Activated CD4-positive, alpha-beta memory T cell treated with anti-CD3 and anti-CD28 coated beads, Interleukin-2, amount 10 ng/mL, durations not matched to agents 7 days and 5 days (primary cell): ENCODE measurements at regions of chr3 and their contacts with region 1.

Region 1: GRCh38 chr3:38136777-38137614 is at the start of gene ACAA1:
- DNase-seq: peak; percentile 99
- H3K4me3 Mint-ChIP-seq: peak within 1 kb of the TSS; percentile 90
- H3K27ac Mint-ChIP-seq: peak within 1 kb of the TSS; percentile 96
- H3K4me1 Mint-ChIP-seq: peaks cover 74% of the 10 kb centered on the region
- H3K27me3 Mint-ChIP-seq: no peaks in the 10 kb centered on the region
- total RNA-seq, gene ACAA1: 76.8 to 77.5 TPM

Region 2: DNA sequence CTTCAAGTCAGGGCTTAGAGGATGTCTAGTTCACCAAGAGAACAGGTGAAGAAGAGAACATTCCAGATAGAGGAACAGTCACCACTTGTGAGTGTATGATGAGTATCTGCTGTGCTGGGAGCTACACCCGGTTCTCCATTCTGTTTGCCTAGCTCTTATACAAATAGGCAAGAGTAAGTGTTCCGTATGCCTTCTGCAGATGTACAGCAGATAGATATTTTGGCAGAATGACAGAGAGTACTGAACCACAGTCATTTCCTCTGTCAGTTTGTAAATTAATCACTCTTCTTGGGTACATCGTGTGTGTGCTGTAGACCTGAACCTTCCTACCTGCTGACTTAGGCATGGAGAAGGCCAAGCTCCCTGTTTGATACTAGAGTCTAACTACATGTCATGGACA is 383.6 kb before region 1 on chr3:
- CTCF ChIA-PET with region 1: no interaction called
- POLR2A ChIA-PET with region 1: no interaction called
- DNase-seq: no peak
- H3K4me3 Mint-ChIP-seq: no peak overlapping the region
- H3K27ac Mint-ChIP-seq: no peak overlapping the region
- H3K4me1 Mint-ChIP-seq: peaks cover 3% of the 10 kb centered on the region
- H3K27me3 Mint-ChIP-seq: peaks cover 26% of the 10 kb centered on the region

Region 3: DNA sequence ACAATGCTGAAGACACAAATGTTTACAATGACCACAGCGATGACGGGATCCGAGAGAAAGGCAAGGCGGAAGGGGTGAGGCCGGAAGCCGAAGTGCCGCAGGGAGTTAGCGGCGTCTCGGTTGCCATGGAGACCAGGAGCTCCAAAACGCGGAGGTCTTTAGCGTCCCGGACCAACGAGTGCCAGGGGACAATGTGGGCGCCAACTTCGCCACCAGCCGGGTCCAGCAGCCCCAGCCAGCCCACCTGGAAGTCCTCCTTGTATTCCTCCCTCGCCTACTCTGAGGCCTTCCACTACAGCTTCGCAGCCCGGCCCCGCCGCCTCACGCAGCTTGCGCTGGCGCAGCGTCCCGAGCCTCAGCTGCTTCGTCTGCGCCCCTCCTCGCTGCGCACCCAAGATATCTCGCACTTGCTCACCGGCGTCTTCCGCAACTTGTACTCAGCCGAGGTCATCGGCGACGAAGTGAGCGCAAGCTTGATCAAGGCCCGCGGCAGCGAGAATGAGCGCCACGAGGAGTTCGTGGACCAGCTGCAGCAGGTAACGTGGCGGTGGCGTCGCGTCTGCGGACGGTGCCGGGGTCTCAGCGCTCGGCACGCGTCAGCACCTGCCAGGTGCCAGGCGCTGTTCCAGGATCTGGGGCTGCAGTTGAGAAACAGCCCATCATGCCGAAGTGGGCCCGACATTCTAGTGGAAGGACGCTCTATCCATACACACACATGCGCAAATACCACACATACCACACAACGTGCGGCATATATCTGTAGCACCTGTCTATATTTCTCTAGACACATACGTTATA is 97.7 kb before region 1 on chr3 and contains the start of gene DLEC1:
- CTCF ChIA-PET with region 1: interaction called, 3 read pairs
- POLR2A ChIA-PET with region 1: interaction called, 28 read pairs
- DNase-seq: peak; percentile 94
- H3K4me3 Mint-ChIP-seq: peak within 1 kb of the TSS; percentile 54
- H3K27ac Mint-ChIP-seq: peak within 1 kb of the TSS; percentile 98
- H3K4me1 Mint-ChIP-seq: peaks cover 37% of the 10 kb centered on the region
- H3K27me3 Mint-ChIP-seq: no peaks in the 10 kb centered on the region
- total RNA-seq, gene DLEC1: 3.8 to 4.2 TPM

Region 4: GRCh38 chr3:38117748-38118420 is 19.1 kb before region 1 on chr3:
- CTCF ChIA-PET with region 1: interaction called, 4 read pairs
- POLR2A ChIA-PET with region 1: interaction called, 13 read pairs
- DNase-seq: peak; percentile 81
- H3K4me3 Mint-ChIP-seq: no peak overlapping the region
- H3K27ac Mint-ChIP-seq: no peak overlapping the region
- H3K4me1 Mint-ChIP-seq: peaks cover 3% of the 10 kb centered on the region
- H3K27me3 Mint-ChIP-seq: no peaks in the 10 kb centered on the region

Region 5: GRCh38 chr3:38154033-38154494 is 17.1 kb after region 1 on chr3:
- CTCF ChIA-PET with region 1: interaction called, 4 read pairs
- POLR2A ChIA-PET with region 1: interaction called, 109 read pairs
- DNase-seq: no peak
- H3K4me3 Mint-ChIP-seq: no peak overlapping the region
- H3K27ac Mint-ChIP-seq: no peak overlapping the region
- H3K4me1 Mint-ChIP-seq: peaks cover 54% of the 10 kb centered on the region
- H3K27me3 Mint-ChIP-seq: no peaks in the 10 kb centered on the region

Region 6: GRCh38 chr3:38171622-38172021 is 34.6 kb after region 1 on chr3:
- CTCF ChIA-PET with region 1: no interaction called
- POLR2A ChIA-PET with region 1: interaction called, 286 read pairs
- DNase-seq: no peak
- H3K4me3 Mint-ChIP-seq: no peak overlapping the region
- H3K27ac Mint-ChIP-seq: no peak overlapping the region
- H3K4me1 Mint-ChIP-seq: peaks cover 77% of the 10 kb centered on the region
- H3K27me3 Mint-ChIP-seq: no peaks in the 10 kb centered on the region

Region 7: DNA sequence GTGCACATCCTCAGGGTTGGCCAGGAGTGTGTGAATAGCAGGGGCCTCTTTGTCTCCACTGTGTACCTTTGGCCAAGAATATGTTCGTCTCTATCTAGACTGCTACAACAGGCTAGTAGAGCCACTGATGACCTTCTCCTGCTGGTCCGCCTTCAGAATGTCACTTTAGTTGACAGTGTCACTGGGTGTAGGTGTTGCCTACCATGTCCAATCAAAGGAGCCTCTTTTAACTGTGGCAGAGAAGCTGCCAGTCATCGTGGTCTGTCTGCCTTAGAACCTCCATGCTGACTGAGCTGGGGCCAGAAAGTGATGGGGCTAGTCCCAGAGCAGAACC is 68.4 kb after region 1 on chr3:
- CTCF ChIA-PET with region 1: no interaction called
- POLR2A ChIA-PET with region 1: interaction called, 10 read pairs
- DNase-seq: no peak
- H3K4me3 Mint-ChIP-seq: no peak overlapping the region
- H3K27ac Mint-ChIP-seq: peak overlapping the region; percentile 59
- H3K4me1 Mint-ChIP-seq: peaks cover 69% of the 10 kb centered on the region
- H3K27me3 Mint-ChIP-seq: no peaks in the 10 kb centered on the region